Heart right ventricle (tissue), 16 donors: ENCODE measurements at regions of chr9 and their contacts with region 1.

Region 1: DNA sequence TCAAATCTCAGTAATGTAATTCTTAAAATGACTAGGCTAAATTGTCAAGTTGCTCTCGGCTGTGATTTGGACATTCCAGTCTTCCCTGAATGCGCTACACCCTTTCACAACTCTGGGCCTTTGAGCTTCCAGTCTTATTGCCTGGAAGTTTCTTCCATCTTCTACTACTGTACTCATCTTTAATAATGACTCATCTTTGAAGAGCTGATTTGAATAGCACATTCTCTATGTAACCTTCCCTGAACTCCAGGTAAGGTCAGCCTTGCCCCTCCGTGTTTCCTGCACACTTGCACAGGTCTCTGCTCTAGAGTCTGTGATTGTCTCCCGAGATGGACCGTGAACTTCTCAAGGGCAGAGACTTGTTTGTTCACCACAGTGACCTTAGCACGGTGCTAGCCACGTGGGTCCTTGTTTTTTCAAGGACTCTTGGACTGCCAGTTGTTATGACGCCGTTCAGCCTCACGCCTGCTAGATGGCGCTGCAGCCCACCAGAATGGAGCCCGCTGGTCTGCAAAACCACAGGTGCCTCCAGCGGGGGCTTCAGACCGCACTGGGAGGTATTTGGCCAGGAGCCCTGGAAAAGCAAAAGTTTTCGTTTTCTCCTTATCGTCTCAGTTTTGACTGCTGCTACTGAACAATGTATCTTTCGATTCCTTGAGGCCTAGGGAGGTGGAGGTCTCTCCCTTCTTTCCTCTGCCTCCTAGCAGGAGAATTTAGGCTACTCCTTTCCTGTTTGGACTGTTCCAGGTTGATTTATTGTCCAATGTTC is 44.4 kb downstream of the SEC61B start:
- DNase-seq: peak; percentile 68 to 74
- ATAC-seq: peak; percentile 55 to 92 (median 83)
- H3K4me3 ChIP-seq: no peak overlapping the region
- H3K27ac ChIP-seq: no peak overlapping the region
- H3K4me1 ChIP-seq: peaks cover 0 to 12% (median 6%) of the 10 kb centered on the region in 9 donors
- H3K27me3 ChIP-seq: no peaks in the 10 kb centered on the region
- CTCF ChIP-seq: peak; percentile 69 to 91 (median 88)

Region 2: DNA sequence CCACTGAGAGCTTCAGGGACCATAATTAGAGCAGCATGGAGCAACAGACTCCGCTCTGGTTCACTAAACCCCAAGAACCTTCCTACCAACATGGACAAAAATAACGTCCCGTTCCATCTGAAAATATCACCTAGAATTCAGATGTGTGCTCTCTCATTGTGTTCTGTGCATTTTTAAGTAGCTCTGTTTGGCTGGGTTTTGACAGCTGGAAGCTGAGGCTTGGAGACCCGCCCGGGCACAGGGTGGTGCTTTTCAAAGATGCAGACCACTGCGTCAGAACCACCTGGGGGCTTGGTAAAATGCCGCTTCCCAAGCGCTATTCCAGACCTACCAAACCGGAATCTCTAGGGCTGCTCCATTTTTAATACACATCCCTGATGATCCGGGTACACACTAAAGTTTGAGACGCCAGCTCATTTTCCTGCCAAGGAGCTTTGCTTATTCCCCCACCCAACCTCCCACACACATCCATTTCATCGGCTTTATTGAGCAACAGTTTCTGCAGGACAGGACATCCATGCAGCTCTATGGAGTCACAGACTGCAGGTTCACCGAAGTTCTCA is 662.5 kb before region 1 on chr9:
- intact Hi-C with region 1: no loop called
- DNase-seq: no peak
- ATAC-seq: peak in 4 of 8 donors; percentile 20 to 73 (median 66)
- H3K4me3 ChIP-seq: no peak overlapping the region
- H3K27ac ChIP-seq: peak overlapping the region in 2 of 10 donors; percentile 3 to 41
- H3K4me1 ChIP-seq: peaks cover 0 to 18% (median 3%) of the 10 kb centered on the region in 9 donors
- H3K27me3 ChIP-seq: peaks cover 0 to 6% (median 0%) of the 10 kb centered on the region in 7 donors
- CTCF ChIP-seq: no peak

Region 3: GRCh38 chr9:99353408-99353807 is 87.0 kb after region 1 on chr9:
- intact Hi-C with region 1: no loop called
- DNase-seq: no peak
- ATAC-seq: no peak
- H3K4me3 ChIP-seq: no peak overlapping the region
- H3K27ac ChIP-seq: peak overlapping the region in 1 of 10 donors; percentile 43
- H3K4me1 ChIP-seq: peaks cover 0 to 23% (median 12%) of the 10 kb centered on the region in 9 donors
- H3K27me3 ChIP-seq: no peaks in the 10 kb centered on the region
- CTCF ChIP-seq: no peak

Region 4: GRCh38 chr9:99999797-100000196 is 733.4 kb after region 1 on chr9:
- intact Hi-C with region 1: loop called in 1 of 10 experiments (anchors 10 kb)
- DNase-seq: no peak
- ATAC-seq: no peak
- H3K4me3 ChIP-seq: no peak overlapping the region
- H3K27ac ChIP-seq: no peak overlapping the region
- H3K4me1 ChIP-seq: no peaks in the 10 kb centered on the region
- H3K27me3 ChIP-seq: no peaks in the 10 kb centered on the region
- CTCF ChIP-seq: no peak

Region 5: DNA sequence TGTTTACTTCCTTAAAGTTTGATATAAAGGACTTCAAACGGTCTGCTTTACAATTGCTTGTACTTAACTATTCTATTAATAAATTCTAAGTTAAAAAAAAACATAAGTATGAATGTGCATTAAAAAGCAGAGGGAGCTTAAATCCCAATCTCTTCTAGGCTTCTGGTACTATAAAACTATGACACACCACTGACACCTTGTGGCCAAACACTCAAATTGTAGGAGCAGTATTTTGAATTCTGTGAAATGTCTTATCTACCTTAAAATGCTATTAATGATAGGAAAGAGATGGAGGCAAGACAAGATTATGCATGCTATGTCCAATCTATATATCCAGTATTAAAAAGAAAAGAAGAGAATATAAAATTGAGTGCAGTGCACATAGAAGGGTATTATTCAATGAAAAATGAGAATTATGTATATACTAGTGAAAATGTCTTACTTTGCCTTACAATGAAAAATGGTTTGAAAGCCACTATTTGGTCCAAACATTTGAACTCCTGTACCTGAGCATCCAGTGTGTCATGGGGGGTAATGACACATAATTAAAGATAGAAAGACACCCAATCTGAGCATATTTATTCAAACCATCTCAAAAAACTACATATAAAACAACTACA is 744.7 kb after region 1 on chr9:
- intact Hi-C with region 1: loop called in 3 of 10 experiments (anchors 5 to 10 kb)
- DNase-seq: no peak
- ATAC-seq: no peak
- H3K4me3 ChIP-seq: no peak overlapping the region
- H3K27ac ChIP-seq: no peak overlapping the region
- H3K4me1 ChIP-seq: no peaks in the 10 kb centered on the region
- H3K27me3 ChIP-seq: no peaks in the 10 kb centered on the region
- CTCF ChIP-seq: peak in 7 of 9 donors; percentile 44 to 64 (median 57)

Region 6: DNA sequence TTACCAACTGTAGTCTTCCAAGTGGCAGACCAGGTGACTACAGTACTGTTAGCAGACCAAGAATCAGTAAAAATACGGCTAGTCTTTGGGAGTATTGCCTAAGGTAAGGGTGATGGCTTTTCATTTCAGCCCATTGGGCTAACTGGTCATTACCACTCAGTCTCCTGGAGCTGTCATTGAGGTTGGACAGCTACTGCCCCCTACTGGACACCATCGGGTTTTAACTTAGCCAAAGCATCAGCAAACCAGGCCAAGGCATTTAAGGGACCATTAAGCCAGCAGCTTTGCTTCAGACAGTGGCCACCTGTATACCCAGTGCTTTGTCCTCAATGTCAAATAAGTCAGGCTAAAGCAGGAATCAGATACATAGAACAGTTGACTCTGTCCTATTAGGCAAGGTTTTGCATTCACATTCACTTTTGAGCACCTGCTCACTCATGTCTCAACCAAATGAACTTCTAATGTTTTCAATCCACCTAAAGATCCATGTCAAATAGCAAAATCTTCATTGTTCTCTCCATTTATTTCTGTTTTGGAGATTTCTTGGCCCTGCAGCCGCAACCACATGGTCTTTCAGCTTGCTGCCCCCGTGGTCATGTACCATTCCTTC is 949.8 kb after region 1 on chr9:
- intact Hi-C with region 1: loop called in 1 of 10 experiments (anchors 10 kb)
- DNase-seq: peak in 1 of 2 donors; percentile 54
- ATAC-seq: peak in 6 of 8 donors; percentile 48 to 70 (median 58)
- H3K4me3 ChIP-seq: no peak overlapping the region
- H3K27ac ChIP-seq: no peak overlapping the region
- H3K4me1 ChIP-seq: peaks cover 0 to 14% (median 0%) of the 10 kb centered on the region in 9 donors
- H3K27me3 ChIP-seq: no peaks in the 10 kb centered on the region
- CTCF ChIP-seq: peak; percentile 44 to 75 (median 62)